GM13976 (cell line): ENCODE measurements at regions of chr1 and their contacts with region 1.

Region 1: GRCh38 chr1:61782771-61783170 is 40.5 kb downstream of the PATJ start:
- DNase-seq: no peak
- CTCF ChIP-seq: no peak

Region 2: DNA sequence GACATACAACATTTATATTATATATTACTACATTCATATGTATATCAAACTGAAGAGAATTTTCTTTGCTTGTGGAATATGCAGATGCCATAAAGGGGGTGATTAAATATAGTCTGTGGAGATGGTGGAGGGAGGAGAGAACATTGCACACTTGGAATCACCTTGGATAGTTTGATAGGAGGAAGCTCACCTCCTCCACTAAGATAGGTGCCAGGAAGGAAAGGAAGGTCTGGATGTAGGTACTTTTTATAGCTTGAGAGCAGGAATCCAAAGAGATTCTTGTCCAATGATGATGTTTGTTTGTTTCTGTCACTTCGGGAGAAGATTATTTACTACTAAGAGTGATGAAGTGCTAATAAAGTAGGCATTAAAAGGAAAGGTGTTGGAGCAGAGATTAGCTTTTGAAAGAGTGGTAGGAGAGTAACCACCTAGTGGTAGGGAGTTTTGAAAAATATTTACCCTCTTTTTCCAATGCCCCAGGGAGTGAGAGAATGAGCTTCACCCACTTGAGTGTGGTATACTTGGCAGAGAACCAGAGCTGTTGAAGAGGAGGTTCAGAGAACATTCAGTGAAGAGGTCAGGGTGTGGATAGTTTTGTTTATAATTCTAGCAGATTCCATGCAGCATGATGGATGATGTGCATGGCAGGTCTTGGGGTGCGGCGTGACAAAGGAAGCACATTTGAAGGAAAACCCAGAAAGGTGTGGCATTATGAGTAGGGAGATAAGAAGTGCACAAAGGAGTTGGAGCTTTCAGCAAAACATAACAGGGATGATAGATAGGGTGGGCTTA is 104.5 kb after region 1 on chr1:
- in situ Hi-C with region 1: loop called (anchors 25 kb)
- DNase-seq: no peak
- CTCF ChIP-seq: no peak